Activated T-helper 1 cell treated with anti-CD3 and anti-CD28 coated beads, Interleukin-12 subunit alpha, Interleukin-12 subunit beta, Interleukin-2, Interleukin-4 antibody, amounts not matched to agents 30 ng/mL and 10 ng/mL and 1 ng/mL, durations not matched to agents 14 hours and 24 hours and 36 hours (primary cell): ENCODE measurements at regions of chr3 and their contacts with region 1.

Region 1: DNA sequence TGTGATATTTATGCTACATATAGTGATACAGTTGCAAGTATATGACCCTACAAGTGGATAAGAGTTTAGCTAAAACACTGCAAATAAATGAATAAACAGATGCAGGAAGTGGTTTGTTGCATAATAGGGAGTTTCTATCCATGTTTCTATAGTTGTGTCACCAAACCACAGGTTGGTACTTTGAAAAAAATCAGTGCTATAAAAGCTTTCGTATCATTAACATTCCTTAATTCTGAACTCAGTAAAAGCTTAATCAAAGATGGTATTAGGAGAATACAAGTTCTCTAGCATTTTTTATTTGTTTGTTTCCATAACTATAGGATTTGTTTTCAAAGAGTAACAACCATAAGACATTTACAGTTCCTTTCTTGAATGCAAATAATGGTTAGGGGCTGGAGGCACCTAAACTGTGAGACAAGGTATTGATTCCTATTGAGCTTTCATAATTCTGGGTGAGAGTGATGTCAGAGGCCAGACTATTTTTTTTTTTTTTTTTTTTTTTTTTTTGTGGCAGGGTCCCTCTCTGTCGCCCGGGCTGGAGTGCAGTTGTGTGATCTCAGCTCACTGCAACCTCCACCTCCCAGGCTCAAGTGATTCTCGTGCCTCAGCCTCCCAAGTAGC is 29.6 kb downstream of the CPOX start:
- DNase-seq: no peak
- H3K4me3 Mint-ChIP-seq: peak overlapping the region; percentile 47
- H3K27ac Mint-ChIP-seq: peak overlapping the region; percentile 53
- H3K4me1 Mint-ChIP-seq: peaks cover 94% of the 10 kb centered on the region
- H3K27me3 Mint-ChIP-seq: no peaks in the 10 kb centered on the region

Region 2: GRCh38 chr3:98240131-98240530 is 323.6 kb before region 1 on chr3:
- intact Hi-C with region 1: no loop called
- DNase-seq: no peak
- H3K4me3 Mint-ChIP-seq: no peak overlapping the region
- H3K27ac Mint-ChIP-seq: no peak overlapping the region
- H3K4me1 Mint-ChIP-seq: no peaks in the 10 kb centered on the region
- H3K27me3 Mint-ChIP-seq: peaks cover 3% of the 10 kb centered on the region

Region 3: GRCh38 chr3:98449606-98450193 is 114.1 kb before region 1 on chr3:
- intact Hi-C with region 1: no loop called
- DNase-seq: no peak
- H3K4me3 Mint-ChIP-seq: no peak overlapping the region
- H3K27ac Mint-ChIP-seq: no peak overlapping the region
- H3K4me1 Mint-ChIP-seq: peaks cover 18% of the 10 kb centered on the region
- H3K27me3 Mint-ChIP-seq: peaks cover 14% of the 10 kb centered on the region

Region 4: DNA sequence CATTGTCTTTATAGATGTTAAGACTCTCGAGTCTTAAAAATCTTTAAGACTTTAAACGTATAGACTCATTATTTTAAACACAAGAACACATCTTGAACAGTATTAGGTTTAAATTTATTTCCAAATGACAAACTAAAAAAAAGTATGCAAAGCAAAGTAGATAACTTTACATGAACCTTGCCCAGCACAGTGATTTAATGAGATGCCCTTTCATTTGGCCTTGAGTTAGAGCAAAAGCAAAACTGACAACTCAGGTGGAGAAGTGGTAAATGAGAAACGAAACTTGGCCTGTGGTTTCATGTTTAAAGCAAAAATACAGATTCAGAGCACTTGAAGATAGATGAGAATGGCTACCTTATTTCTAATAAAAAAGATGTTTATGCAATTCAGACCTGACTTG is 23.4 kb before region 1 on chr3:
- intact Hi-C with region 1: loop called (anchors 1 kb)
- DNase-seq: no peak
- H3K4me3 Mint-ChIP-seq: peak overlapping the region; percentile 41
- H3K27ac Mint-ChIP-seq: peak overlapping the region; percentile 76
- H3K4me1 Mint-ChIP-seq: peaks cover 75% of the 10 kb centered on the region
- H3K27me3 Mint-ChIP-seq: no peaks in the 10 kb centered on the region